Breast epithelium (tissue), 4 donors: ENCODE measurements at regions of chr18 and their contacts with region 1.

Region 1: DNA sequence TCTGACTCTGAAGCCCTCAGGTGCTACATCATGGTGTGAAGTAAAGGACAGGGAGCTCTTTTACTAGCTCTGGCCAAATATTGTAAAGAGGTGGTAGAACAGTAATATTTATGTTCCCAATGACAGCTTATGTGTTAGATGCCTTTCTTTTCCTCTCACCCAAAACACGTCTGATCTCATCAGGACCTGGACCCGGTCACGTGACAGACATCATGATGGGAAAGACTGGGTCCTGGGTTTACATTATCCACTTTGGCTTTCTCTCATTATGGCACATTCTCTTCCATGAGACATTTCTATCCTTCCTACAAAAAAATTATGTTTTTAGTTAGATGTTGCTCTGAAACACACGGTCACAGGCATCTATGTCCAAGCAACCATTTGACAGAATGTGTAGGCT is 548.7 kb upstream of the CDH7 start:
- DNase-seq: no peak
- H3K4me3 ChIP-seq: no peak overlapping the region
- H3K27ac ChIP-seq: no peak overlapping the region
- H3K4me1 ChIP-seq: no peaks in the 10 kb centered on the region
- H3K27me3 ChIP-seq: no peaks in the 10 kb centered on the region
- CTCF ChIP-seq: no peak
- POLR2A ChIP-seq: no peak

Region 2: GRCh38 chr18:66395671-66396218 is 1193.7 kb after region 1 on chr18:
- intact Hi-C with region 1: loop called (anchors 5 kb)
- DNase-seq: no peak
- H3K4me3 ChIP-seq: no peak overlapping the region
- H3K27ac ChIP-seq: no peak overlapping the region
- H3K4me1 ChIP-seq: no peaks in the 10 kb centered on the region
- H3K27me3 ChIP-seq: no peaks in the 10 kb centered on the region
- CTCF ChIP-seq: no peak
- POLR2A ChIP-seq: no peak